Sigmoid colon (tissue), 7 donors: ENCODE measurements at regions of chr19 and their contacts with region 1.

Region 1: GRCh38 chr19:13033819-13034611 is 38.7 kb downstream of the NFIX start:
- DNase-seq: peak; percentile 96
- H3K4me3 ChIP-seq: no peak overlapping the region
- H3K27ac ChIP-seq: peak overlapping the region; percentile 84 to 98 (median 95)
- H3K4me1 ChIP-seq: peaks cover 0 to 100% (median 100%) of the 10 kb centered on the region in 4 donors
- H3K27me3 ChIP-seq: no peaks in the 10 kb centered on the region
- CTCF ChIP-seq: peak; percentile 76 to 86 (median 84)
- EP300 ChIP-seq: no peak
- POLR2A ChIP-seq: no peak

Region 2: GRCh38 chr19:12983542-12984142 is 50.4 kb before region 1 on chr19:
- intact Hi-C with region 1: loop called (anchors 2 kb)
- DNase-seq: peak; percentile 91
- H3K4me3 ChIP-seq: peak overlapping the region in 3 of 4 donors; percentile 32 to 38 (median 38)
- H3K27ac ChIP-seq: peak overlapping the region in 2 of 4 donors; percentile 37 to 51
- H3K4me1 ChIP-seq: peaks cover 0 to 9% (median 7%) of the 10 kb centered on the region in 4 donors
- H3K27me3 ChIP-seq: no peaks in the 10 kb centered on the region
- CTCF ChIP-seq: peak; percentile 89 to 96 (median 94)
- EP300 ChIP-seq: no peak
- POLR2A ChIP-seq: no peak

Region 3: GRCh38 chr19:12994701-12995595 is 39.1 kb before region 1 on chr19 and contains the start of gene NFIX:
- intact Hi-C with region 1: loop called (anchors 5 kb)
- DNase-seq: peak; percentile 86
- H3K4me3 ChIP-seq: peak within 1 kb of the TSS; percentile 86 to 97 (median 90)
- H3K27ac ChIP-seq: peak within 1 kb of the TSS; percentile 92 to 98 (median 98)
- H3K4me1 ChIP-seq: peaks cover 0 to 39% (median 35%) of the 10 kb centered on the region in 4 donors
- H3K27me3 ChIP-seq: no peaks in the 10 kb centered on the region
- CTCF ChIP-seq: no peak
- EP300 ChIP-seq: no peak
- POLR2A ChIP-seq: no peak
- total RNA-seq, gene NFIX: 44.1 to 104 (median 58.5) TPM

Region 4: GRCh38 chr19:13093407-13094105 is 59.5 kb after region 1 on chr19:
- intact Hi-C with region 1: loop called (anchors 2 kb)
- DNase-seq: peak; percentile 95
- H3K4me3 ChIP-seq: no peak overlapping the region
- H3K27ac ChIP-seq: peak overlapping the region; percentile 81 to 95 (median 86)
- H3K4me1 ChIP-seq: peaks cover 0 to 95% (median 84%) of the 10 kb centered on the region in 4 donors
- H3K27me3 ChIP-seq: no peaks in the 10 kb centered on the region
- CTCF ChIP-seq: peak; percentile 89 to 96 (median 94)
- EP300 ChIP-seq: no peak
- POLR2A ChIP-seq: no peak